HCT116 (cell line): ENCODE measurements at regions of chr3 and their contacts with region 1.

Region 1: DNA sequence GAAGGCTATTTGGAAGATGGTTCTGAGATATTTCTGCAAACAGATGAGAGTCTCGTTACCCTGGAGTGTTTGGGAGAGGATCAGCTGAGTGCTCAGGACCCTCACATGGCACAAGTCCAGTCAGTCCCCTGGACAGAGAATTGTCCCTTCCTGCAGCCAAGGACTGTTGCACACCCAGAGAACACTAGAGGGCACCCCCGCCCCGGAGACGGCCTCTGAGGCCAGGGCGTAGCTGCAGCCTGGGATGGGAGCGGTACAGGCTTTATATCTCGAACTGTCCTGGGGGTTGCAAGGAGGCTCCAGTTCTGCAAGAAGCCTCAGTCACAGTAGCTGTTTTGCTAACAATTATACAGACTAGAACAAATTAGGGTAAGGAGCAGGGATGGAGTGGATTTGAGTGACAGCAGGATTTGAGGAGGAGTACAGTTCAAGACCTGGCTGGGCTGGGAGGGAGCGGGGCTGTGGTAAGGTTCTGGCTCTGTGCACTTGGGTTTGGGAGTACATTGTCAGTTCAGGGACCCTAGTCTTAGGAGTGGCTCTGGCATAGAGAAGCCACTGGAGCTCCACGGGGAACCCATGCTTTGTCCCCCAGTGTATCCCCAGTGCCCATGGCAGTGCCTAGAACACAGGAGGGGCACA is 67.6 kb upstream of the HACD2 start:
- DNase-seq: peak; percentile 18
- ATAC-seq: peak; percentile 100
- H3K4me3 ChIP-seq: no peak overlapping the region
- H3K27ac ChIP-seq: no peak overlapping the region
- H3K4me1 ChIP-seq: no peaks in the 10 kb centered on the region
- H3K27me3 ChIP-seq: no peaks in the 10 kb centered on the region
- CTCF ChIP-seq: peak; percentile 91 to 93 (median 92)
- POLR2A ChIP-seq: no peak
- RAD21 ChIP-seq: peak; percentile 96

Region 2: DNA sequence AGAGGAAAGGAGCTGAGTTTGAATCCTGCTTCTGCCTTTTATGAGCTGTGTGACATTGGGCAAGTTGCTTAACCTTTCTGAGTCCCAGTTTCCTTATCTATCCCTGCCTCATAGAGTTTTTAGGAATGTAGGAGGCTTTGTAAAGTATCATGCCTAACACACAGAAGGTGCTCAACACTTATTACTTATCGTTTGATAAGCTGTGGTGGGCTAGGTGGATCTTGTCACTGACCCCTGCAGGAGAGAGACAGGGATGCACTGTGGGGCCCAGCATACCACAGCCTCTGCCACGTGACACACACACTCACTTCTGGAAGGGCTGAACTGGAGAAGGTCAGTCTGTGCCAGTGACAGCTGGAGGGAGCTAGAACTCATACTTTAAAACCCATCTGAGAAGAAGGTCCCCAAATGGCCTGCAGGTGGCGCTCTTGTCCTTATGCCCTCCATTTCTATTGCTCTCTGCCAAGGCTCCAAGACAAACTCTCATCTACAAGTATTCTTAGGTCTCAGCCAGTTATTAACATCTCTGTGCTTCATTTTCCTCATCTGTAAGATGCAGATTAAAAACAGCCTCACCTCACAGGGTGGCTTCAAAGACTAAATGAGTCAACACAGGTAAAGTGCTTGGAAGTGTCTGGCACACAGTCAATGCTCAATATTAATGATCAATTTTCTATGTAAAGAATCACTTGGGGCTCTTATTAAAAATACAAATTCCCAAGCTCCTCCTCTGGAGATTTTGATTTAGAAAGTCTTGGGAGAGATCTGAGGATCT is 10.1 kb before region 1 on chr3:
- CTCF ChIA-PET with region 1: interaction called, 49 read pairs
- POLR2A ChIA-PET with region 1: no interaction called
- RAD21 ChIA-PET with region 1: interaction called in 1 of 2 experiments, 4 read pairs
- intact Hi-C with region 1: no loop called
- DNase-seq: peak; percentile 93
- ATAC-seq: peak; percentile 100
- H3K4me3 ChIP-seq: no peak overlapping the region
- H3K27ac ChIP-seq: no peak overlapping the region
- H3K4me1 ChIP-seq: peaks cover 0 to 8% of the 10 kb centered on the region in 2 experiments; a peak in 2 of 4 replicates
- H3K27me3 ChIP-seq: no peaks in the 10 kb centered on the region
- CTCF ChIP-seq: peak; percentile 91 to 99 (median 98)
- POLR2A ChIP-seq: no peak
- RAD21 ChIP-seq: peak; percentile 84

Region 3: GRCh38 chr3:123702720-123703119 is 50.3 kb after region 1 on chr3:
- CTCF ChIA-PET with region 1: interaction called, 26 read pairs
- POLR2A ChIA-PET with region 1: no interaction called
- RAD21 ChIA-PET with region 1: interaction called, 3 to 7 read pairs
- intact Hi-C with region 1: loop called (anchors 1 kb)
- DNase-seq: no peak
- ATAC-seq: no peak
- H3K4me3 ChIP-seq: no peak overlapping the region
- H3K27ac ChIP-seq: no peak overlapping the region
- H3K4me1 ChIP-seq: no peaks in the 10 kb centered on the region
- H3K27me3 ChIP-seq: no peaks in the 10 kb centered on the region
- CTCF ChIP-seq: no peak
- POLR2A ChIP-seq: no peak
- RAD21 ChIP-seq: no peak

Region 4: GRCh38 chr3:123718108-123718507 is 65.6 kb after region 1 on chr3:
- CTCF ChIA-PET with region 1: interaction called, 81 read pairs
- POLR2A ChIA-PET with region 1: interaction called, 6 read pairs
- RAD21 ChIA-PET with region 1: interaction called, 7 to 13 read pairs
- intact Hi-C with region 1: loop called (anchors 1 kb)
- DNase-seq: no peak
- ATAC-seq: no peak
- H3K4me3 ChIP-seq: no peak overlapping the region
- H3K27ac ChIP-seq: no peak overlapping the region
- H3K4me1 ChIP-seq: no peaks in the 10 kb centered on the region
- H3K27me3 ChIP-seq: no peaks in the 10 kb centered on the region
- CTCF ChIP-seq: no peak
- POLR2A ChIP-seq: no peak
- RAD21 ChIP-seq: no peak

Region 5: DNA sequence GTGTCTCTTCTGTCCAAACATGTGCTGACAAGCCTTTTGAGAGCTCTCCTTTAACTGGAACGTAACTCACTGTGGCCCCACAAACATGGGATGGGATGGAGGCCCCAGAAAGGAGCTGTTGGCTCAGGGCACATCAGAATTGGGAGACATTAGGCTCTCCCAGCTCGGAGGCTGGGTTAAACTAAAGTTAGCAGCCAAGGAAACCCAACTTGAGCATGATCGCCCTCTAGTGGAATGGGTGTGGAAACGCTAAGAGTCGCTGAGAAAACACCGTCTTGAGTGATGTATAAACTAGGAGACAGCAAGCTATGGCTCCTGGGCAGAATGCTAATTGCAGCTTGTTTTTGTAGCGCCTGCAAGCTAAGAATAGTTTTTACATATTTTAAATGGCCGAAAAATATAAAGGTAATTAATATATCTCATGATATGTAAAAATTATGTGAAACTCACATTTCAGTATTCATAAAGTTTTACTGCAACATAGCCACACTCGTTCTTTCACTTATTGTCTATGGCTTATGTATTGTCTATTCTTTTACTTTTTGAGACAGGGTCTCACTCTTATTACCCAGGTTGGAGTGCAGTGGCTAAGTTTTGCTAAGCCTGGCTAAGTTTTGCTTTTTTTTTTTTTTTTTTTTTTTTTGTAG is 71.2 kb after region 1 on chr3:
- CTCF ChIA-PET with region 1: interaction called, 81 read pairs
- POLR2A ChIA-PET with region 1: interaction called, 6 read pairs
- RAD21 ChIA-PET with region 1: interaction called, 7 to 13 read pairs
- intact Hi-C with region 1: loop called (anchors 1 kb)
- DNase-seq: peak; percentile 73
- ATAC-seq: peak; percentile 80
- H3K4me3 ChIP-seq: peak overlapping the region; percentile 4 to 34; a peak in 2 of 4 replicates
- H3K27ac ChIP-seq: no peak overlapping the region
- H3K4me1 ChIP-seq: peaks cover 0 to 7% of the 10 kb centered on the region in 2 experiments; a peak in 2 of 4 replicates
- H3K27me3 ChIP-seq: no peaks in the 10 kb centered on the region
- CTCF ChIP-seq: peak; percentile 69 to 85 (median 85); a peak in 5 of 6 replicates
- POLR2A ChIP-seq: no peak
- RAD21 ChIP-seq: peak; percentile 64

Region 6: GRCh38 chr3:123876858-123877257 is 224.4 kb after region 1 on chr3:
- CTCF ChIA-PET with region 1: no interaction called
- POLR2A ChIA-PET with region 1: no interaction called
- RAD21 ChIA-PET with region 1: no interaction called
- intact Hi-C with region 1: loop called (anchors 5 kb)
- DNase-seq: no peak
- ATAC-seq: peak; percentile 60
- H3K4me3 ChIP-seq: no peak overlapping the region
- H3K27ac ChIP-seq: no peak overlapping the region
- H3K4me1 ChIP-seq: no peaks in the 10 kb centered on the region
- H3K27me3 ChIP-seq: no peaks in the 10 kb centered on the region
- CTCF ChIP-seq: peak; percentile 25 to 53 (median 51); a peak in 5 of 6 replicates
- POLR2A ChIP-seq: no peak
- RAD21 ChIP-seq: peak; percentile 34; the same call in 1 of the 2 replicates

Region 7: GRCh38 chr3:124078953-124079911 is 426.8 kb after region 1 on chr3:
- CTCF ChIA-PET with region 1: interaction called, 5 read pairs
- POLR2A ChIA-PET with region 1: no interaction called
- RAD21 ChIA-PET with region 1: no interaction called
- intact Hi-C with region 1: loop called (anchors 1 kb)
- DNase-seq: peak; percentile 22
- ATAC-seq: peak; percentile 67
- H3K4me3 ChIP-seq: no peak overlapping the region
- H3K27ac ChIP-seq: no peak overlapping the region
- H3K4me1 ChIP-seq: no peaks in the 10 kb centered on the region
- H3K27me3 ChIP-seq: peaks cover 64% of the 10 kb centered on the region
- CTCF ChIP-seq: peak; percentile 71 to 78 (median 73)
- POLR2A ChIP-seq: no peak
- RAD21 ChIP-seq: peak; percentile 79